Activated B cell treated with CpG ODN at 0.5 μM for 24 hours (primary cell): ENCODE measurements at regions of chr19 and their contacts with region 1.

Region 1: GRCh38 chr19:11035441-11036377 is 53.6 kb upstream of the LDLR start:
- DNase-seq: peak; percentile 82
- ATAC-seq: peak; percentile 85
- H3K4me3 Mint-ChIP-seq: peak overlapping the region; percentile 33
- H3K27ac Mint-ChIP-seq: peak overlapping the region; percentile 81
- H3K4me1 Mint-ChIP-seq: peaks cover 22% of the 10 kb centered on the region
- H3K27me3 Mint-ChIP-seq: no peaks in the 10 kb centered on the region
- CTCF ChIP-seq: no peak

Region 2: DNA sequence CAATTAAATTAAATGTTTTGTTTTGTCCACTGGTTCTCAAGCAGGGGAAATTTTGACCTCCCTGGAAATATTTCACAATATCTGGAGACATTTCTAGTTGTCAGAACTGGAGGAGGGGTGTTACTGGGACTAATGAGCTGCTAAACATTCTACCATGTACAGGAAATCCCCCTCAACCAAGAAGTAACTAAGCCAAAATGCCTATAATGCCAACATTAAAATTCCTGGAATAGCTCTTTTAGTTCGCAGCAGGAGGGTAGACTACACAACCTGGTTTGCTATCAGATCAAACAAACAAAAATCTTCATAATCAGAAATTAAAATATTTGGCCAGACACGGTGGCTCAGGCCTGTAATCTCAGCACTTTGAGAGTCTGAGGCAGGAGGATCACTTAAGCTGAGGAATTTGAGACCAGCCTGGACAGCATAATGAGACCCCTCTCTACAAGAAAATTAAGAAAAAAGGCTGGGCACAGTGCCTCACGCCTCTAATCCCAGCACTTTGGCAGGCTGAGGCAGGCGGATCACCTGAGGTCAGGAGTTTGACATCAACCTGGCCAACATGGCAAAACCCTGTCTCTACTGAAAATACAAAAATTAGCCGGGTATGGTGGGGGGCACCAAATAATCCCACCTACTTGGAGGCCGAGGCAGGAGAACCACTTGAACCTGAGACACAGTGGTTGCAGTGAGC is 88.6 kb before region 1 on chr19:
- CTCF ChIA-PET with region 1: interaction called, 11 read pairs
- POLR2A ChIA-PET with region 1: no interaction called
- intact Hi-C with region 1: loop called (anchors 1 kb)
- DNase-seq: no peak
- ATAC-seq: no peak
- H3K4me3 Mint-ChIP-seq: no peak overlapping the region
- H3K27ac Mint-ChIP-seq: no peak overlapping the region
- H3K4me1 Mint-ChIP-seq: peaks cover 1% of the 10 kb centered on the region
- H3K27me3 Mint-ChIP-seq: no peaks in the 10 kb centered on the region
- CTCF ChIP-seq: no peak

Region 3: GRCh38 chr19:11073568-11073967 is 37.9 kb after region 1 on chr19:
- CTCF ChIA-PET with region 1: no interaction called
- POLR2A ChIA-PET with region 1: no interaction called
- intact Hi-C with region 1: no loop called
- DNase-seq: no peak
- ATAC-seq: no peak
- H3K4me3 Mint-ChIP-seq: no peak overlapping the region
- H3K27ac Mint-ChIP-seq: no peak overlapping the region
- H3K4me1 Mint-ChIP-seq: peaks cover 12% of the 10 kb centered on the region
- H3K27me3 Mint-ChIP-seq: peaks cover 21% of the 10 kb centered on the region
- CTCF ChIP-seq: no peak

Region 4: DNA sequence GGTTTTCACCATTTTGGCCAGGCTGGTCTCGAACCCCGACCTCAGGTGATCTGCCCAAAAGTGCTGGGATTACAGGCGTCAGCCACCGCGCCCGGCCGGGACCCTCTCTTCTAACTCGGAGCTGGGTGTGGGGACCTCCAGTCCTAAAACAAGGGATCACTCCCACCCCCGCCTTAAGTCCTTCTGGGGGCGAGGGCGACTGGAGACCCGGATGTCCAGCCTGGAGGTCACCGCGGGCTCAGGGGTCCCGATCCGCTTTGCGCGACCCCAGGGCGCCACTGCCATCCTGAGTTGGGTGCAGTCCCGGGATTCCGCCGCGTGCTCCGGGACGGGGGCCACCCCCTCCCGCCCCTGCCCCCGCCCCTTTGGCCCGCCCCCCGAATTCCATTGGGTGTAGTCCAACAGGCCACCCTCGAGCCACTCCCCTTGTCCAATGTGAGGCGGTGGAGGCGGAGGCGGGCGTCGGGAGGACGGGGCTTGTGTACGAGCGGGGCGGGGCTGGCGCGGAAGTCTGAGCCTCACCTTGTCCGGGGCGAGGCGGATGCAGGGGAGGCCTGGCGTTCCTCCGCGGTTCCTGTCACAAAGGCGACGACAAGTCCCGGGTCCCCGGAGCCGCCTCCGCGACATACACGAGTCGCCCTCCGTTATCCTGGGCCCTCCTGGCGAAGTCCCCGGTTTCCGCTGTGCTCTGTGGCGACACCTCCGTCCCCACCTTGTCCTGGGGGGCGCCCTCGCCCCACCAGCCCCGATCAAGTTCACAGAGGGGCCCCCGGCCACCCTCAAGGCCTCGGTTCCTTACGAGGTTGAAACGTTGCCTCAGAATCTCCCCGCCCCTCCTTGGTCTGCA is 54.6 kb after region 1 on chr19:
- CTCF ChIA-PET with region 1: interaction called, 9 read pairs
- POLR2A ChIA-PET with region 1: interaction called, 14 read pairs
- intact Hi-C with region 1: loop called (anchors 2 kb)
- DNase-seq: peak; percentile 71
- ATAC-seq: peak; percentile 87
- H3K4me3 Mint-ChIP-seq: peak overlapping the region; percentile 78
- H3K27ac Mint-ChIP-seq: peak overlapping the region; percentile 30
- H3K4me1 Mint-ChIP-seq: peaks cover 41% of the 10 kb centered on the region
- H3K27me3 Mint-ChIP-seq: peaks cover 15% of the 10 kb centered on the region
- CTCF ChIP-seq: no peak

Region 5: DNA sequence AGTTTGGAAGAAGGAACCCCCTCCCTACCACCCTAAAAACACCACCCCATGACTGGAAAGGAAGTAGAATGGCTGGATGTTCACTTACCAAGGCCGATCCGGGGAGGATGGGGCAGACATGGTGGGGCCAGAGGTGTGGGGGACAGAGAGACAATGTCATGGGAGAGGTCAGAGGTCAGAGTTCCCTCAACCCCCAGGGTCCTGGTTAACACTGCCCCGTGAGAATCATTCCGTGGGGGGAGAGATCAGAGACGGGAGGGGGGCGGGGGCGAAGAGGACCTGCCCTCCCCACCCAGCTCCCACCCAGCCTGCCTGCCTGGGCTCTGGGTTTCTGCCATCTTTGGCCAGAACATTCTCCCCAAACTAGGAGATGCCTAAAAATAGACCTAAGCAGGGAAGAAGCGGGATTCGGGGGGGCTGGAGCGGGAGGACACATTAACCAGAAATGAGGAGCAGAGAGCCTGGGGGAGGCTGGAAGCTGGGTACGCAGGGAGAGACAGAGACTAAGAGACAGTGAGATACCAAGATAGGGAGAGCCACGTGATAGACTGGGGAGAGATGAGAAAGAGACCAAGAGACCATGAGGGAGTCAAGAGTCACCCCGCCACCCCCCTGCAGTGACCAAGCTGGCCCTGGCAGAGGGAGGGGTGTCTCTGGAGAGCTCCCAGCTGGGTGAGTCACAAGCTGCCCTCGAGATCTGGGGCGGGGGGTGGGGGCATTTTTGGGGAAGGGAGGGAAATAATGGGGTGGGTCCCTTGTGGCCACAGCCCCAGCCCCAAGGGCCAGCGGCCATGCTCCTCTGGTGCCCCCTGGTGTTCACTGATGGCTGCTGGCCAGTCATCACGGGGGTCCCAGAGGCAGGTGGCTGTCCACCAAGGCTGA is 167.7 kb after region 1 on chr19:
- CTCF ChIA-PET with region 1: interaction called, 17 read pairs
- POLR2A ChIA-PET with region 1: interaction called, 7 read pairs
- intact Hi-C with region 1: loop called (anchors 1 kb)
- DNase-seq: peak; percentile 38
- ATAC-seq: peak; percentile 69
- H3K4me3 Mint-ChIP-seq: no peak overlapping the region
- H3K27ac Mint-ChIP-seq: no peak overlapping the region
- H3K4me1 Mint-ChIP-seq: peaks cover 14% of the 10 kb centered on the region
- H3K27me3 Mint-ChIP-seq: peaks cover 3% of the 10 kb centered on the region
- CTCF ChIP-seq: peak; percentile 52